Activated CD4-positive, alpha-beta T cell treated with anti-CD3 and anti-CD28 coated beads, Interleukin-2, amount 10 ng/mL, durations not matched to agents 24 days and 14 days (primary cell): ENCODE measurements at regions of chr5 and their contacts with region 1.

Region 1: GRCh38 chr5:172984243-172984953 is 827 bp downstream of the ATP6V0E1 start:
- DNase-seq: peak; percentile 90
- H3K4me3 Mint-ChIP-seq: peak overlapping the region; percentile 98
- H3K27ac Mint-ChIP-seq: peak overlapping the region; percentile 99
- H3K4me1 Mint-ChIP-seq: peaks cover 20% of the 10 kb centered on the region
- H3K27me3 Mint-ChIP-seq: no peaks in the 10 kb centered on the region

Region 2: GRCh38 chr5:172697123-172698121 is 287.0 kb before region 1 on chr5:
- intact Hi-C with region 1: no loop called
- DNase-seq: peak; percentile 95
- H3K4me3 Mint-ChIP-seq: peak overlapping the region; percentile 87
- H3K27ac Mint-ChIP-seq: peak overlapping the region; percentile 81
- H3K4me1 Mint-ChIP-seq: peaks cover 14% of the 10 kb centered on the region
- H3K27me3 Mint-ChIP-seq: peaks cover 22% of the 10 kb centered on the region

Region 3: DNA sequence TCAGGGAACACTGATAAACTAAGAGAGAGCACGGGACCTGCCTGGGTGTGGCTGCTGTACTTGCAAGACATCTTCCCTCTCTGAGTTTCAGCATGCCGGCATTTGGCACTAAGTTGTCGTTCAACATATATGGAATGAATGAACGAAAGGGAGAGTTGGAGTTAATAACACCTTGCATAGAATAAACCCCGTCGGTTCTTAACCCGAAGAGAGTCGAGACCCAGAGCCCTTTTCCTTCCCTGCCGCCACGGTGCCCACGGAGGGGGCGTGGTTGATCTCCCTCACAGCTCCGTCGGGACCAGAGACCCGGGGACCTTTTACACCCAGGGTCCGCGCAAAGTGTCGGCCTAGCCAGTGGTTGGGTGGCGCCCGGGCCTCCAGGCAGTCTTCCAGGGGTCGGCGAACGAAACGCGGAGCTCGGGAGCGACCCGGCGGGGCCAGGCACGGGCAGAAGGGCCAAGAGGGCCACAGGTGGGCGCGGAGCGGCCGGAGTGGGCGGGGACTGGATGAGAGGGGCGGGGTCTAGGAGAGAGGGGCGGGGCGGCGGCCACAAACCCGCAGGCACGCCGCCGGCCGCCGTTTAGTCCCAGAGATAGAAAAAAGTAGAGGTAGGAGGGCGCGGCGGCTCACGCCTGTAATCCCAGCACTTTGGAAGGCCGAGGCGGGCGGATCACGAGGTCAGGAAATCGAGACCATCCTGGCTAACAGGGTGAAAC is 25.9 kb before region 1 on chr5:
- intact Hi-C with region 1: loop called (anchors 1 kb)
- DNase-seq: peak; percentile 86
- H3K4me3 Mint-ChIP-seq: peak overlapping the region; percentile 92
- H3K27ac Mint-ChIP-seq: peak overlapping the region; percentile 90
- H3K4me1 Mint-ChIP-seq: peaks cover 30% of the 10 kb centered on the region
- H3K27me3 Mint-ChIP-seq: peaks cover 4% of the 10 kb centered on the region

Region 4: DNA sequence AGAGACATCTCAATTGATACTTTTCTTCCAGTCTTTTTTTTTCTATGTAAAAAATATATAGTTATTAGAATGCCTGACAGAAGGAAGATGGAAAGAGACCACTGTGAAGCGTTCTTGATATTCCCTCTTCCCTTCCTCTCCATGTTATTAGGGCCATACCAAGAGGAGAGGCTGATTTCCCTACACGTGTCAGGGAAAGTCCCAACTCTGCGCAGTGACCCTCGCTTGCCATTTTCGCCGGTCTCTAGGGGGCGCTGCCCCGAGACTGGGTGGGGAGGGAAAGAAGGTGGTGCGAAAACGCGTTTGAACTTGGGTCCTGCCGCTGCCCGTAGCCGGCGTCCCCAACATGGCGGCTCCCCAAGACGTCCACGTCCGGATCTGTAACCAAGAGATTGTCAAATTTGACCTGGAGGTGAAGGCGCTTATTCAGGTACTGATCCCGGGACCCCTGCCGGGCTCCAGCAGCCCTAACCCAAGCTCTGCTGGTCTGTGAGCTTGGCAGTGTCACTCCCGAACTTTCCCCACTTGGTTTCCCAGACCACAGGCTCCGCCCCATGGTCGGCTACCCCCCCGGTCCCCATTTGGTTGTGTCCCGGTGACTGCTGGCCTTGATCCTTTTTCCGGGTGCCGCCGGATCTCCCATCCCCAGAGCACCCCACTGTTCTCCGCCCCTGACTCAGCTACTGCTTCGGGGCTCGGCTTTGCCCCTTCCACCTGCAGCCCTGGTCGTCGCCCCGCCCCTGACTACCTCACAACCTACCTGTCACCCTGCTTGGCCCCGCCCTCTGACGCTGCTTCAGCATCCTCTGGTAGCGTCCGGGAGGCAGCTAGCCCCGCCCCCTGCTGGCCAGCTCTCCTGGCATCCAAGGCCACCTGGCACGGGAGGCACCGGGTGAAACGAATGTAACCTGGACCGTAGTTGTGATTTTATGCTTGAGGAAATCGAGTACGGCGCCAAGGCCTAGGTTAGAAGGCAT is 160.1 kb after region 1 on chr5 and contains the start of gene BNIP1:
- intact Hi-C with region 1: loop called (anchors 1 kb)
- DNase-seq: peak; percentile 99
- H3K4me3 Mint-ChIP-seq: peak within 1 kb of the TSS; percentile 97
- H3K27ac Mint-ChIP-seq: peak within 1 kb of the TSS; percentile 98
- H3K4me1 Mint-ChIP-seq: peaks cover 13% of the 10 kb centered on the region
- H3K27me3 Mint-ChIP-seq: no peaks in the 10 kb centered on the region
- total RNA-seq, gene BNIP1: 20.9 and 26.5 TPM in 2 replicates

Region 5: GRCh38 chr5:173283318-173284288 is 299.2 kb after region 1 on chr5:
- intact Hi-C with region 1: loop called (anchors 2 kb)
- DNase-seq: peak; percentile 91
- H3K4me3 Mint-ChIP-seq: peak overlapping the region; percentile 26
- H3K27ac Mint-ChIP-seq: no peak overlapping the region
- H3K4me1 Mint-ChIP-seq: peaks cover 8% of the 10 kb centered on the region
- H3K27me3 Mint-ChIP-seq: peaks cover 51% of the 10 kb centered on the region